PC-9 (cell line): ENCODE measurements at regions of chr3 and their contacts with region 1.

Region 1: GRCh38 chr3:166607933-166608521 is 770.8 kb upstream of the BCHE start:
- DNase-seq: no peak
- H3K4me3 ChIP-seq: no peak overlapping the region
- H3K27ac ChIP-seq: no peak overlapping the region
- H3K4me1 ChIP-seq: 0 out of 2 replicates have a peak, but pooled peaks cover 3% of the 10 kb centered on the region
- H3K27me3 ChIP-seq: no peaks in the 10 kb centered on the region
- CTCF ChIP-seq: no peak

Region 2: DNA sequence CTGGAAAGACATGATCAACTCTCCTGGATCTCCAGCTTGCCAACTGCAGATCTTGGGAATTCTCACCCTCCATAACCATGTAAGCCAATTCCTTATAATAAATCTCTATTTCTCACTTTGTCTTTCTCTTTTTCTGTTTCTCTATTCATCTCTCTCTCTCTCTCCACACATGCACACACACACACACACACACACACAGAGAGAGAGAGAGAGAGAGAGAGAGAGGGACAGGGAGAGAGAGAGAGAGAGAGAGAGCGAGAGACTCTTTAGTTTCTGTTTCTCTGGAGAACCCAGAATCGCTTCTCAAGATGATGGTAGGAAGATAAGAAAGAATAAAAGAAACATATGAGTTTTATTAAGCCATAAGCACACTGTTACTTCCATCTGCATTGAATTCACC is 882.7 kb before region 1 on chr3:
- CTCF ChIA-PET with region 1: no interaction called
- POLR2A ChIA-PET with region 1: interaction called, 29 read pairs
- intact Hi-C with region 1: no loop called
- DNase-seq: no peak
- H3K4me3 ChIP-seq: no peak overlapping the region
- H3K27ac ChIP-seq: no peak overlapping the region
- H3K4me1 ChIP-seq: no peaks in the 10 kb centered on the region
- H3K27me3 ChIP-seq: no peaks in the 10 kb centered on the region
- CTCF ChIP-seq: no peak